ENCODE measurements at regions of chr9 and their contacts with region 1.

Region 1: GRCh38 chr9:106862825-106863720 is at the start of gene ZNF462:
- DNase-seq: peak; percentile 73
- H3K4me3 Mint-ChIP-seq: peak within 1 kb of the TSS; percentile 84
- H3K27ac Mint-ChIP-seq: peak within 1 kb of the TSS; percentile 53
- H3K4me1 Mint-ChIP-seq: peaks cover 23% of the 10 kb centered on the region
- H3K27me3 Mint-ChIP-seq: no peaks in the 10 kb centered on the region
- CTCF ChIP-seq: peak; percentile 24
- total RNA-seq, gene ZNF462: 45.7 and 47.2 TPM in 2 replicates

Region 2: GRCh38 chr9:105842023-105842644 is 1020.9 kb before region 1 on chr9:
- CTCF ChIA-PET with region 1: interaction called, 6 read pairs
- POLR2A ChIA-PET with region 1: no interaction called
- intact Hi-C with region 1: loop called (anchors 1 kb)
- DNase-seq: peak; percentile 46
- H3K4me3 Mint-ChIP-seq: no peak overlapping the region
- H3K27ac Mint-ChIP-seq: no peak overlapping the region
- H3K4me1 Mint-ChIP-seq: no peaks in the 10 kb centered on the region
- H3K27me3 Mint-ChIP-seq: peaks cover 19% of the 10 kb centered on the region
- CTCF ChIP-seq: peak; percentile 93

Region 3: DNA sequence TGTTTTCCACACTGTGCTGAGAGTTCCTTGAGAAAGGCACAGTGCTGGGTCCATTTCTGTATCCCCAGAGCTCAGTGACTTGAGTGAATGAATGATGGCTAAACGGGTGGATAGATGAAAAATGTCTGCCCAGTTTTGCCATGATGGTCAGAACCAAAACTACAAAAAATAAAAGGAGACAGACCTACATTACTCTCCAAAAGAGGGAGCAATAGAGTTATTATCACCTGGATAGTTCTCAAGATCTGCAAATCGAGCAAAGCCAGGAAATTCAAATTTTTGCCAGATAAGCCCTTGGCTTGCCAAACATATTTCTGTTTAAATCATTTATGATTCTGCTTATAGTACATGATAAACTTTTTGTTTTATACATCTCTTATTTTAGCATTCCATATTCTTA is 214.3 kb before region 1 on chr9:
- CTCF ChIA-PET with region 1: interaction called, 9 read pairs
- POLR2A ChIA-PET with region 1: interaction called, 7 read pairs
- intact Hi-C with region 1: loop called (anchors 1 kb)
- DNase-seq: peak; percentile 32
- H3K4me3 Mint-ChIP-seq: no peak overlapping the region
- H3K27ac Mint-ChIP-seq: no peak overlapping the region
- H3K4me1 Mint-ChIP-seq: peaks cover 6% of the 10 kb centered on the region
- H3K27me3 Mint-ChIP-seq: no peaks in the 10 kb centered on the region
- CTCF ChIP-seq: peak; percentile 50

Region 4: GRCh38 chr9:106799146-106799545 is 63.9 kb before region 1 on chr9:
- CTCF ChIA-PET with region 1: interaction called, 5 read pairs
- POLR2A ChIA-PET with region 1: interaction called, 3 read pairs
- intact Hi-C with region 1: loop called (anchors 5 kb)
- DNase-seq: peak; percentile 79
- H3K4me3 Mint-ChIP-seq: no peak overlapping the region
- H3K27ac Mint-ChIP-seq: no peak overlapping the region
- H3K4me1 Mint-ChIP-seq: peaks cover 32% of the 10 kb centered on the region
- H3K27me3 Mint-ChIP-seq: no peaks in the 10 kb centered on the region
- CTCF ChIP-seq: no peak

Region 5: DNA sequence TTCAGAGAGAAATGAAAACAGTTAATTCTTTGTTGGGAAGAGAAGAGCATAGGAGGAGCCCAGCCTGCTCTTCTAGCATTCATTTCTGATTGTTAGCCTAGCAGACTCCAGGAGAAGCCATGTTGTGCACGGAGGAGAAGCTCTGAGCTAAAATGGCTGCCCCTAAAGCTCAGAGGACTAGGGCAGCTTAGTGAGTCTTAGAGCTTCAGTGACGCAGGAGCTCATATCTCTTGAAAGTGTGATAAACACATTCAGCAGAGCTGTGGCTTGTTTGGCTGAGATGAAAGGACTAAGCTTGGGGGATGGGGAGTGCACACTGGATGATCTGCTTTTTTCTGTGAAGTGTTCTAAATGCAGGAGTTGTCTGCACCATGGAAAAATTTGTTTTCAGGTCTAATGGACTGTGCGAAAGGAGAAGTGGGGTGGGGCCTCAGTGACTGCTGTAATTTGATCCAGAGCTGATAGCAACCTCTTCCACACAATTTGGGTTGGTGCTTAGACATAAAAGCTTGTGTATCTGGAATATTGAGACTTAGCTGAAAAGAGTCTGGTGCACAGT is 58.3 kb after region 1 on chr9:
- CTCF ChIA-PET with region 1: interaction called, 3 read pairs
- POLR2A ChIA-PET with region 1: interaction called, 95 read pairs
- intact Hi-C with region 1: loop called (anchors 2 kb)
- DNase-seq: peak; percentile 29
- H3K4me3 Mint-ChIP-seq: peak overlapping the region; percentile 38
- H3K27ac Mint-ChIP-seq: peak overlapping the region; percentile 82
- H3K4me1 Mint-ChIP-seq: peaks cover 36% of the 10 kb centered on the region
- H3K27me3 Mint-ChIP-seq: no peaks in the 10 kb centered on the region
- CTCF ChIP-seq: no peak

Region 6: GRCh38 chr9:107137495-107138202 is 274.6 kb after region 1 on chr9:
- CTCF ChIA-PET with region 1: interaction called, 5 read pairs
- POLR2A ChIA-PET with region 1: no interaction called
- intact Hi-C with region 1: loop called (anchors 2 kb)
- DNase-seq: peak; percentile 59
- H3K4me3 Mint-ChIP-seq: no peak overlapping the region
- H3K27ac Mint-ChIP-seq: no peak overlapping the region
- H3K4me1 Mint-ChIP-seq: no peaks in the 10 kb centered on the region
- H3K27me3 Mint-ChIP-seq: peaks cover 33% of the 10 kb centered on the region
- CTCF ChIP-seq: peak; percentile 71